Dendritic cell treated with granulocyte-macrophage colony-stimulating factor and Interleukin-4, amounts not matched to agents 40 ng/mL and 50 ng/mL, for 4 days (primary cell): ENCODE measurements at regions of chr9 and their contacts with region 1.

Region 1: DNA sequence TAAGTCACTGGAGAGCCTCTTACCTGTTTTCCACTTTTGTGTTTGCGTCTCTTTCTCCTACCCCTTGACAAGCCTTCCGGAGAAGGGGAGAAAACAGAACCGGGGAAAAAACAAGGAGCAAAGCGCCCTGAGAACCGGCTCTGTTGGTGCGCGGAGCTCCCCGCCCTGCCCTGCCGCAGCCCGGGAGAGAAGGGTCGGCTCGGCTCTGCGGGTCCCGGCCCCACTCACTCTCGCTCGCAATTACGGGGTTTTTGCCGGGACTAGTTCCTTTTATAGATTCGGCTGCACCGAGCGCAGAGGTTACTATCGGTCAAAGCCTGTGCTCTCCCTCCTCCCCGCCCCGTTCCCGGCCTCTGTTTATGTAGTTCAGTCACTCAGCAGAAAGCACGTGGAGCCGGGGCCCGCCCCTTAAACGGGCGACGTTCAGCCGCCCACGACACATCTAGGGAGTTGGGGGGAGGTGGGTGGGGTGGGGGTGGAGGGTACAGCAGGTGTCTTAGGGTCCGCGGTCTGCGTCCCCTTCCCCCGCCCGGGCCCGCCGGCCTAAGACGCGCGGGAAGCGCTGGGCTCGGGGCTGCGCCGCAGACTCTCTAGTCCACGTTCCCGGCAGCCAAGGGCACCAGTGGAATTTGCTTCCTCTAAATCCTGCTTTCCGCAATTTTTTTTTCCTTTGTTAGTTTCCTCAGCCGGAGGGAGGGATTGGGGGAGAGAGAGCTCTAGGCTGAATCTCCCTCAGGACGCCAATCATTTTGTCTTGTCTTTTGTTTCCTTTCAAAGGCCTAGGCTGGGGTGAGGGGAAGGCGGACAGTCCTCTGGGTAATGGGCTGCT is at the start of gene ABCA1:
- H3K4me3 Mint-ChIP-seq: peak within 1 kb of the TSS; percentile 99
- H3K27ac Mint-ChIP-seq: peak within 1 kb of the TSS; percentile 98
- H3K4me1 Mint-ChIP-seq: peaks cover 27% of the 10 kb centered on the region
- H3K27me3 Mint-ChIP-seq: peaks cover 7% of the 10 kb centered on the region

Region 2: DNA sequence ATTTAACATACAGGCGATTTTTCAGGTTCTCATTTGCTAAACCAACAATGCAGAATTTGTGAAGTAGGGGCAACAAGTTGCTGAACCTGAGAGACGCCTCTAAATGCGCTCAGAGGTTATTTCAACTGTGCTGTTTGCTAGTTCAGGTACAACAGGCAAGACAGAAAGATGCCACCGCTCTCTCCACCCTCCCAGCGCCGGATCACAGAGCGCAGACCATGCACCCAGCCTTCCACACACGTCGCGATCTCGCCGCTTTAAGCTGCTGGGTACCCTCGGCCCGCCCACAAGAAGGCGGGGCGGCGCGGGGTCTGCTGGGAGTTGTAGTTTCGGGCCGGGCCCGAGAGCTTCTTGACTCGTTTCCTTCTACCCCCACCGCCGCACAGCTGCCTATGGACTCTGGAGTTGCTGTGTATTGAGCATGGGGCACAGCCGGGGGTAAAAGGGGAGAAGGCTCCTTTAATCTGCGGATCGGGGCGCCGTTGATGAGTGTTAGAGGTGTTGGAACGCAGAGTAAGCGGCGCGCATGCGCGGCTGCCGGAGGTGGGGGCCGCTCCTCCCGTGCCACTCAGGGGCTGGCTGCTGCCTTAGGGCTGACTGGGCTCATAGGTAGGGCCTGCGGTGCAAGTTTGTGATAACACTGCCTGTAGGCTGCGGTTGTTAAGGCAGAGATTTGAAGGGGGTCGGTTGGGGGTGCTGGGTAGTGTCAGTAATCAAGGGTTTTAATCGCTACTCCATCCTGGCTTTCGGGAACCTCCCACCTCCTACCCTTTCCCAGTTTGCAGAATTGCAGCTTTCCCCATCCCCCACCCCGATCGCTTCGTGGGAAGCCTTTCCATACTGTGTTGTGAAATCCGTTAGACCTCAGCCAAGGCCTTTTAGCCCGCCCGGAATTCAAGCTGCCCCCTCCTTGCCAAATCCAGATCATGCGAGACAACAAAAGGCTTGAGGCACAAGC is 40.2 kb after region 1 on chr9:
- intact Hi-C with region 1: loop called (anchors 1 kb)
- H3K4me3 Mint-ChIP-seq: peak overlapping the region; percentile 97
- H3K27ac Mint-ChIP-seq: peak overlapping the region; percentile 85
- H3K4me1 Mint-ChIP-seq: peaks cover 19% of the 10 kb centered on the region
- H3K27me3 Mint-ChIP-seq: peaks cover 6% of the 10 kb centered on the region

Region 3: GRCh38 chr9:105007143-105007542 is 79.0 kb after region 1 on chr9:
- intact Hi-C with region 1: loop called (anchors 5 kb)
- H3K4me3 Mint-ChIP-seq: peak overlapping the region; percentile 63
- H3K27ac Mint-ChIP-seq: peak overlapping the region; percentile 88
- H3K4me1 Mint-ChIP-seq: peaks cover 43% of the 10 kb centered on the region
- H3K27me3 Mint-ChIP-seq: peaks cover 12% of the 10 kb centered on the region

Region 4: GRCh38 chr9:105053209-105053652 is 125.1 kb after region 1 on chr9:
- intact Hi-C with region 1: no loop called
- H3K4me3 Mint-ChIP-seq: no peak overlapping the region
- H3K27ac Mint-ChIP-seq: peak overlapping the region; percentile 68
- H3K4me1 Mint-ChIP-seq: peaks cover 39% of the 10 kb centered on the region
- H3K27me3 Mint-ChIP-seq: no peaks in the 10 kb centered on the region

Region 5: GRCh38 chr9:105244003-105244733 is 316.0 kb after region 1 on chr9 and contains the start of gene SLC44A1:
- intact Hi-C with region 1: loop called (anchors 10 kb)
- H3K4me3 Mint-ChIP-seq: peak within 1 kb of the TSS; percentile 99
- H3K27ac Mint-ChIP-seq: peak within 1 kb of the TSS; percentile 99
- H3K4me1 Mint-ChIP-seq: peaks cover 45% of the 10 kb centered on the region
- H3K27me3 Mint-ChIP-seq: peaks cover 2% of the 10 kb centered on the region